ENCODE measurements at regions of chr9 and their contacts with region 1.

Region 1: GRCh38 chr9:131799177-131799823 is 59.4 kb upstream of the RAPGEF1 start:
- DNase-seq: peak; percentile 33
- H3K4me3 Mint-ChIP-seq: no peak overlapping the region
- H3K27ac Mint-ChIP-seq: no peak overlapping the region
- H3K4me1 Mint-ChIP-seq: no peaks in the 10 kb centered on the region
- H3K27me3 Mint-ChIP-seq: peaks cover 7% of the 10 kb centered on the region

Region 2: GRCh38 chr9:131773911-131774379 is 25.4 kb before region 1 on chr9:
- intact Hi-C with region 1: loop called (anchors 1 kb)
- DNase-seq: peak; percentile 7
- H3K4me3 Mint-ChIP-seq: no peak overlapping the region
- H3K27ac Mint-ChIP-seq: no peak overlapping the region
- H3K4me1 Mint-ChIP-seq: no peaks in the 10 kb centered on the region
- H3K27me3 Mint-ChIP-seq: peaks cover 16% of the 10 kb centered on the region

Measured in activated T-helper 1 cell treated with anti-CD3 and anti-CD28 coated beads, Interleukin-12 subunit alpha, Interleukin-12 subunit beta, Interleukin-2, Interleukin-4 antibody, amounts not matched to agents 30 ng/mL and 10 ng/mL and 1 ng/mL, durations not matched to agents 14 hours and 24 hours and 36 hours (primary cell).